Activated CD8-positive, alpha-beta T cell treated with anti-CD3 and anti-CD28 coated beads for 36 hours (primary cell): ENCODE measurements at regions of chr4 and their contacts with region 1.

Region 1: GRCh38 chr4:77385124-77385969 is 220.3 kb upstream of the CXCL13 start:
- DNase-seq: peak; percentile 73
- ATAC-seq: peak; percentile 73
- H3K4me3 Mint-ChIP-seq: no peak overlapping the region
- H3K27ac Mint-ChIP-seq: no peak overlapping the region
- H3K4me1 Mint-ChIP-seq: no peaks in the 10 kb centered on the region
- H3K27me3 Mint-ChIP-seq: no peaks in the 10 kb centered on the region
- CTCF ChIP-seq: peak; percentile 74

Region 2: GRCh38 chr4:77358315-77358928 is 26.9 kb before region 1 on chr4:
- CTCF ChIA-PET with region 1: interaction called, 15 read pairs
- POLR2A ChIA-PET with region 1: no interaction called
- intact Hi-C with region 1: no loop called
- DNase-seq: peak; percentile 13
- ATAC-seq: peak; percentile 62
- H3K4me3 Mint-ChIP-seq: no peak overlapping the region
- H3K27ac Mint-ChIP-seq: no peak overlapping the region
- H3K4me1 Mint-ChIP-seq: no peaks in the 10 kb centered on the region
- H3K27me3 Mint-ChIP-seq: peaks cover 4% of the 10 kb centered on the region
- CTCF ChIP-seq: peak; percentile 72

Region 3: DNA sequence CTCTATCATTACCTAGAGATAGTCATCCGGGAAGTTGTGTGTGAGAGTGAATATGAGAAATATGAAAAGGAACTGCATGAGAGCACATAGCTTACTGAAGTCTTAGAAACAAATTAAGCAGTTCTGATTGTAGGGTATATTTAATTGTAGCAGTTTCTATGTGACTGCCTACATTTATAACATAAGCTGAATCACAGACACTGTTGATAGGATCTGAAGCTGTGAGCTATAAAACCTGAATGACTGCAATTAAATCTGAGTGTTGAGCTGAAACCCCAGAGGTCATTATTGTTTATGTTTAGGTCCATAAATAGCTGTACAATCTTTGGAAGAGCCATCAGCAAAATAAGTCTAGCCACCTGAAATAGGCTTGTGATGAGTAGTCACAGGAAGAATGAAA is 10.1 kb after region 1 on chr4:
- CTCF ChIA-PET with region 1: interaction called, 13 read pairs
- POLR2A ChIA-PET with region 1: no interaction called
- intact Hi-C with region 1: no loop called
- DNase-seq: no peak
- ATAC-seq: no peak
- H3K4me3 Mint-ChIP-seq: no peak overlapping the region
- H3K27ac Mint-ChIP-seq: no peak overlapping the region
- H3K4me1 Mint-ChIP-seq: no peaks in the 10 kb centered on the region
- H3K27me3 Mint-ChIP-seq: peaks cover 5% of the 10 kb centered on the region
- CTCF ChIP-seq: no peak

Region 4: DNA sequence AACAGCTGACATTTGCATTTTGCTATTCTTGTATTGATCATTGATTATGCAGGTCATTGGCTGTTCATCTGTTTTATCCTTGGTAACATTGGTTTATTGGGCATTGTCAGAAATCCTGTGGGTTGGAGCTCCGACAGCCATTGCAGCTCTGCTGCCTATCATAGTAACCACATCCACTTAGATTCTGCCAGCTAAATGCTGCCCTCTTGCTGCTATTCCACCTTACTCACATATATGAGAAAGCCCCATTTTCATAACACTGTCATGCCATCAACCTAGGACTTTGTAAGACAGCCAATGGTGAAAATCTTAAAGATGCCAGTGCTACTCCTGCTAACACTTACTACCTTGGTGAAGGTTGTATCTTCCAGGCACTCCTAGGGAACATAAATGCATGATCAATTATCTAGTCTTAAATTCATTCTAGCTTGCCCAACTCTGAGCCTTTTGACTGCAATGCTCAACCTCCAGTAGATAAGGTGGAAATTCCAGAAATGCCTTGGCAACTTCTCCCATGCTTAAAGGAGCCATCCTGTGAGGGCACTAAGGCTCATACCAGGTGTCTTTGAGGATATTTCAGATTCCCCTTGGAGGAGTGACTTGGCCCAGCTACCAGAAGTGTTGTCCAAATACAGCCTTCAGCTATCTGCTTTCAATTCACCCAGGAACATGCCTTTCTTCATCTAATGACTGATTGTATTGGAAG is 33.1 kb after region 1 on chr4:
- CTCF ChIA-PET with region 1: interaction called, 12 read pairs
- POLR2A ChIA-PET with region 1: interaction called, 4 read pairs
- intact Hi-C with region 1: no loop called
- DNase-seq: peak; percentile 24
- ATAC-seq: peak; percentile 68
- H3K4me3 Mint-ChIP-seq: no peak overlapping the region
- H3K27ac Mint-ChIP-seq: no peak overlapping the region
- H3K4me1 Mint-ChIP-seq: no peaks in the 10 kb centered on the region
- H3K27me3 Mint-ChIP-seq: peaks cover 7% of the 10 kb centered on the region
- CTCF ChIP-seq: peak; percentile 15

Region 5: DNA sequence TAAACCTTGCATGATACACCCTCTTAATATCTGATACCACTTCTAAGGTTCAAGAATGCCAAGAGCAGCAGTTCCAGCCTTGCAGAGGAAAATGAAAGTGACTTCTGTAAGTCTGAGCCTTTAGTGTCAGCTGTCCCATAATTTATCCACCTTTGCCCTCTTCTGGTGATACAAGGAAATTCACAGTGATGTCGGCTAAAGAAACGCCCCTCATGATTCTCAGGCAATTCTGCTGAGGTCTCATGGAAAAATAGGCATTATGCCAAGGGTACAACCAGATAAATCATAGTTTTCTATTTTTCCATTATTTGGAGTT is 48.0 kb after region 1 on chr4:
- CTCF ChIA-PET with region 1: interaction called, 14 read pairs
- POLR2A ChIA-PET with region 1: no interaction called
- intact Hi-C with region 1: loop called (anchors 1 kb)
- DNase-seq: peak; percentile 20
- ATAC-seq: peak; percentile 84
- H3K4me3 Mint-ChIP-seq: no peak overlapping the region
- H3K27ac Mint-ChIP-seq: no peak overlapping the region
- H3K4me1 Mint-ChIP-seq: peaks cover 11% of the 10 kb centered on the region
- H3K27me3 Mint-ChIP-seq: no peaks in the 10 kb centered on the region
- CTCF ChIP-seq: peak; percentile 67

Region 6: DNA sequence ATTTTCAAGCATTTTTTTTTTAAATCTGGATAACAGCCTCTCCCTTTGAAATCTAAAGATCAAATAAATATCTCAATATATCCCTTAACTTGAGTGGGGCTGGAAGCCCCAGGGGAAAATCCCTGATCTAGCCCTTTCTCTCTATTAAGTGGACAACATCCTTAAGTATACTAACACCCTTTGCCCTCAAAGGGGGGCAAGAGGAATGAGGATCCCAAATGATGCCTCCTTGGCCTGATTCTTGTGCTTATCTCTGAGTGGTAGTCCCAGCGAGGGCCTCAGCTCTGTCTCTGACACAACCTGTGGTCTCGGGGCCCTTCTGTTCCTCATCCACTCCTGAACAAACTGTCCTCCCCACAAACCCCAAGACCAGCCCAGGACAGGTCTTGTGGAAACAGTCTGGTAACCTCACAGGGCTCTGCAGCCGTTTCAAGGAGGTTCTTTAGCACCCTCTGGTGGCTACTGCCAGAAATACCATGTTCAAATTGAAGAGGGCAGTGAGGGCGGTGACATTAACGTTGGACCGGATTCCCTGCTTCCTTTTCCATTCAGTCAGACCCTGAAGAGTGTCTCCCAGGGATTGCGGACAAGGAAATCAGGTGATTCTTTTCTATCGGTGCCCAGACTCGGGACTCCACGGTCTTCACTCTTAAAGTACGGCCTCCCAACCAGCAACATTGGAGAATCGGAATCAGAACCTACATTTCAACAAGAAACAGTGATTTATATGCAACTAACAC is 233.2 kb after region 1 on chr4:
- CTCF ChIA-PET with region 1: interaction called, 7 read pairs
- POLR2A ChIA-PET with region 1: no interaction called
- intact Hi-C with region 1: loop called (anchors 5 kb)
- DNase-seq: peak; percentile 79
- ATAC-seq: peak; percentile 93
- H3K4me3 Mint-ChIP-seq: no peak overlapping the region
- H3K27ac Mint-ChIP-seq: no peak overlapping the region
- H3K4me1 Mint-ChIP-seq: peaks cover 6% of the 10 kb centered on the region
- H3K27me3 Mint-ChIP-seq: peaks cover 15% of the 10 kb centered on the region
- CTCF ChIP-seq: peak; percentile 85